Gastrocnemius medialis (tissue), 4 donors: ENCODE measurements at regions of chr15 and their contacts with region 1.

Region 1: DNA sequence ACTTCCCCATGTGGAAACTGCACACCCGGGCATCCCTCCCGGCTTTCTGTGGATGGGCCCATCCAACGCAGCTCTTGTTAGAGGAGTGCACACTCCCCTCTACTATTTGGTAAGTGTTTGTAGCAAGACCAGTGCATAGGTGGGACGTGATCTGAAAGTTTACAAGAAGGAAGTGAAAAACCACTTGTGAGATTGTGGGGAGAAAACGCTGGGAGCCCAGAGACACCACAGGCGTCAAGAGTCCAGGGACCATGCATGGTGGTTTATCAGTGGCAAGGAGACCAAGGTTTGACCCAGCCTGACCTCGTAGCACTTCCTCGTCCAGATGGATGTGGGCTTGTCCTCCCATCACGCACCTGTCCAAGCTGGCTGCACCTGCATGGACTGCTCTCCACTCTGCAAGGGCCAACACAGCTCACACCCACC is 51.6 kb downstream of the ATP10A start:
- DNase-seq: no peak
- ATAC-seq: no peak
- H3K4me3 ChIP-seq: no peak overlapping the region
- H3K27ac ChIP-seq: no peak overlapping the region
- H3K4me1 ChIP-seq: no peaks in the 10 kb centered on the region
- H3K27me3 ChIP-seq: no peaks in the 10 kb centered on the region
- CTCF ChIP-seq: no peak
- POLR2A ChIP-seq: no peak

Region 2: DNA sequence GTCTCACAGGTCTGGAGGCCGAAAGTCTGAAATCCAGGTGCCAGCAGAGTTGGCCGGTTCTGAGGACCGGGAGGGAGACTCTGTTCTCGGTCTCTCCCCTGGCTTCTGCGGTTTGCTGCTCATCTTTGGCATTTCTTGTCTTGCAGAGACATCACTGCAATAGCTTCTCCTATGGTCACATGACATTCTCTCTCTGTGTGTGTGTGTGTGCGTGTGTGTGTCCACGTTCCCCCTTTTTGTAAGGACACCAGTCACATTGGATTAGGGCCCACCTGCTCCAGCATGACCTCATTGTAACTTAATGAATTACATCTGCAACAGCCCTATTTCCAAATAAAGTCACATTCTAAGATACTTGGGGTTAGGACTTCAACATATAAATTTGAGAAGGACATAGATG is 64.1 kb after region 1 on chr15:
- in situ Hi-C with region 1: loop called in 1 of 4 experiments (anchors 10 kb)
- intact Hi-C with region 1: no loop called
- DNase-seq: no peak
- ATAC-seq: no peak
- H3K4me3 ChIP-seq: no peak overlapping the region
- H3K27ac ChIP-seq: no peak overlapping the region
- H3K4me1 ChIP-seq: no peaks in the 10 kb centered on the region
- H3K27me3 ChIP-seq: no peaks in the 10 kb centered on the region
- CTCF ChIP-seq: no peak
- POLR2A ChIP-seq: no peak